Activated CD4-positive, alpha-beta memory T cell treated with anti-CD3 and anti-CD28 coated beads, Interleukin-2, amount 10 ng/mL, durations not matched to agents 7 days and 5 days (primary cell): ENCODE measurements at regions of chr17 and their contacts with region 1.

Region 1: GRCh38 chr17:39653662-39654331 is 11.4 kb upstream of the TCAP start:
- DNase-seq: peak; percentile 85
- H3K4me3 Mint-ChIP-seq: no peak overlapping the region
- H3K27ac Mint-ChIP-seq: no peak overlapping the region
- H3K4me1 Mint-ChIP-seq: peaks cover 17% of the 10 kb centered on the region
- H3K27me3 Mint-ChIP-seq: no peaks in the 10 kb centered on the region

Region 2: DNA sequence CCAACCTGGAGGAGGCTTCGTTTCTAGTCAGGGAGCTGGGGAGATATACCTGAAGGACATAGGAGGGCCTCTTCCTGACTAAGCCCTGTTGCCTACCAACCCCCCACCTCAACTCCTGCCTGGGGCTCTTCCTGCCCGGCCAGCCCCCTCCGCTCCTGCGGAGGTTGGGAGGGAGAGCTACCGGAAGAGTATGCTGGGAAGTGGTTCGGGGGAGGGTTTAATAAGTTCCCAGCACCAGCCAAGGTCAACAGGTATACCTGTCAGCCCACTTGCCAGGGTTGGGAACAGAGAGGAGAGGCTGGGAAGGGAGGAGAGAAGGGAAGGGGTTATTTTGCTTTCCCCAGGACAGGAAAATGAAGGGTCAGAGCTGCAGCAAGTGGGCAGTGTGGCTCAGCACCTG is 22.4 kb before region 1 on chr17:
- CTCF ChIA-PET with region 1: interaction called, 31 read pairs
- POLR2A ChIA-PET with region 1: no interaction called
- DNase-seq: no peak
- H3K4me3 Mint-ChIP-seq: no peak overlapping the region
- H3K27ac Mint-ChIP-seq: no peak overlapping the region
- H3K4me1 Mint-ChIP-seq: peaks cover 19% of the 10 kb centered on the region
- H3K27me3 Mint-ChIP-seq: peaks cover 33% of the 10 kb centered on the region

Region 3: DNA sequence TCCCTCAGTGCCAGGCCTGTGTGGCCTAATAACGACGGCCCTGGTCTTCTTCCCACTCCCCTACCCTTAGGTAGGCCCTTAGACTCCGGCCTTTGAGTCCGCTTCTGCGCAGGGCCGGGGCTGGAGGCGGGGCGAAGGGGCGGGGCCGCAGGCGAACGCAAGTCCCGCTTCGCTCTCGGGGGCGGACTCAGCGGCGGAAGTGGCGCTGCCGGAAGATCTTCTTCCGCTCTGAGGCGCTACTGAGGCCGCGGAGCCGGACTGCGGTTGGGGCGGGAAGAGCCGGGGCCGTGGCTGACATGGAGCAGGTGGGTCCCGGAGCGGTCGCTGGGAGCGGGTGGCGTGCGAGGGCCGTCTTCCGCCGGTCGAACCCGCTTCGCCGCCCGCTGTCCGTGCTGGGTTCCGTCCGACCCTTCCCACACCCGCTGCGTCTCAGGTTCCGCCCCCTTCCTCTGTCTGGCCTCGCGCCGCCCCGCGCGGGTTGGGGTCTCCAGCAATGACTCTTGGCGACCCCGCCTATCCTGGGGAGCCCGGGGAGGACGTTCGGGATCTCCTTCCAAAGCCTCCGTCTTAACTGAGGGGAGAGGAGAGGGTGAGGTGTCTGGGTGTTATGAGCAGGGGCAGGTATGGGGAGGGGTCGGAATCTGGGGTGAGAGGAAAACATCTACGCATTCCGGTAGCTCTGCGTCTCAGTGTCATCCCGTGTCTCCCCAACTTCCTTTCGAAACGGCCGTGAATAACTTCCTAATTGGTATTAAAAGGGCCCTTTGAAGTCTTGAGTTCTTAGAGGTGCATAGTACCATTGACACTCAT is 16.7 kb before region 1 on chr17 and contains the start of gene STARD3:
- CTCF ChIA-PET with region 1: interaction called, 31 read pairs
- POLR2A ChIA-PET with region 1: no interaction called
- DNase-seq: peak; percentile 93
- H3K4me3 Mint-ChIP-seq: peak within 1 kb of the TSS; percentile 88
- H3K27ac Mint-ChIP-seq: peak within 1 kb of the TSS; percentile 70
- H3K4me1 Mint-ChIP-seq: peaks cover 50% of the 10 kb centered on the region
- H3K27me3 Mint-ChIP-seq: no peaks in the 10 kb centered on the region
- total RNA-seq, gene STARD3: 72.0 to 73.7 TPM

Region 4: DNA sequence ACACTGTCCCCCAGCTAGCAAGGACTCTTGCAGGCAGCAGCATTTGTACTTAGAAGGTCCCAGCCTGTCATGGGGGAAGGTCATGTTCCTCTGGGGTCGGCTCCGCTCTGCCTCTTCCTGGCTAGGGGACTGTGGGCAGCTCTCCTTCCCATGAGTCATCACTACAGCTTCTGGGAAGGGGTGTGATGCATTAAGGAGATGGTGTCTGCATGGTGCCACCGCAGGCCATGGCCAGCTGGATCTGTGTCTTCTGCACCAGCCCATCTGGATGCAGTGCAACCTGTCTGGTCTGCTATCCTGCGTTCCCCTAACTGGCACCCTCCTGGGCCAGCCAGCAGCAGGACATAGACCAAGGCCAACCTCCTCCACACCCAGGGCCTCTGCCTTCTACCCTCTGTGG is 10.5 kb before region 1 on chr17:
- CTCF ChIA-PET with region 1: interaction called, 22 read pairs
- POLR2A ChIA-PET with region 1: no interaction called
- DNase-seq: no peak
- H3K4me3 Mint-ChIP-seq: no peak overlapping the region
- H3K27ac Mint-ChIP-seq: no peak overlapping the region
- H3K4me1 Mint-ChIP-seq: peaks cover 46% of the 10 kb centered on the region
- H3K27me3 Mint-ChIP-seq: no peaks in the 10 kb centered on the region

Region 5: DNA sequence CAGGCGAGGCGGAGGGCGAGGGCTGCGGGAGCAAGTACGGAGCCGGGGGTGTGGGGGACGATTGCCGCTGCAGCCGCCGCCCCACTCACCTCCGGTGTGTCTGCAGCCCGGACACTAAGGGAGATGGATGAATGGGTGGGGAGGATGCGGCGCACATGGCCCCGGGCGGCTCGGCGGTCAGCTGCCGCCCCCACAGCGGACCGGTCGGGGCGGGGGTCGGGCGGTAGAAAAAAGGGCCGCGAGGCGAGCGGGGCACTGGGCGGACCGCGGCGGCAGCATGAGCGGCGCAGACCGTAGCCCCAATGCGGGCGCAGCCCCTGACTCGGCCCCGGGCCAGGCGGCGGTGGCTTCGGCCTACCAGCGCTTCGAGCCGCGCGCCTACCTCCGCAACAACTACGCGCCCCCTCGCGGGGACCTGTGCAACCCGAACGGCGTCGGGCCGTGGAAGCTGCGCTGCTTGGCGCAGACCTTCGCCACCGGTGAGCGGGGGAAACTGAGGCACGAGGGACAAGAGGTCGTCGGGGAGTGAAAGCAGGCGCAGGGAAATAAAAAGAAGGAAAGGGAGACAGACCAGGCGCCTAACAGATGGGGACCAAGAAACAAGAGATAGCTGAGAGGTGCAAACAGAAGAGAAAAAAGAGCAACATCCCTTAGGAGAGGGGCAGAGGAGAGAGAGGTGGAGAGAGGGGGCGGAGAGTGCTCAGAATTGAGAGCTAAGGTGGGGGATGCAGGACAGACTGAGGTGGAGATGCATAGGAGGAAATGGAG is 14.6 kb after region 1 on chr17 and contains the start of gene PNMT:
- CTCF ChIA-PET with region 1: interaction called, 22 read pairs
- POLR2A ChIA-PET with region 1: interaction called, 3 read pairs
- DNase-seq: peak; percentile 70
- H3K4me3 Mint-ChIP-seq: peak within 1 kb of the TSS; percentile 27
- H3K27ac Mint-ChIP-seq: no peak within 1 kb of the TSS
- H3K4me1 Mint-ChIP-seq: peaks cover 6% of the 10 kb centered on the region
- H3K27me3 Mint-ChIP-seq: peaks cover 34% of the 10 kb centered on the region
- total RNA-seq, gene PNMT: not detected

Region 6: DNA sequence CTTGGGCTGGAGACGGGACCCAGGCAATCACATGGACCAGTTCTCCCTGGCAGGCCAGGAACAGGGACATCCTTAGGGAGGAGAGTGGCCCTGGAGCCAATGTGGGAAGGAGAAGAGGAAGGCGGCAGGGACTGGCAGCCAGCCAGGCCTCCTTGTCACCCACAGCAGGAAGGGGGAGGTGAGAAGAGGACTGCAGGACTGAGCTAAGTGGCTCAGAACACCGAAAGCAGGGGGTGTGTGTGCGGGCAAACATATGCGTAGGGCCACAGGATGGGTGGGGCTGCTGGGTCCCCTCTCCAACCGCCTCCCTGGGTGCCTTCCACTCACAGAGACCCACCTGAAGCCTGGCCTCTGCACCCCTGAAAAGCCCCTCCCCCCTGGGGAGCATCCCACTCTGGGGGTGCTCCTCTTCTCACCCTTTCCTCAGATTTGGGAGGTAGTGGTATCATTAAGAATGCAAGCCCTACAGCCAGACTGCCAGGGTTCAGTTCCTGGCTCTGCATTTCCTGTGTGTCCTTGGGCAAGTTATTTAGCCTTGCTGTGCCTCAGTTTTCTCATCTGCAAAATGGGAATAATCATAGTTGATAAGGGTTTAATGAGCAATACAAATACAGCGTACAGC is 22.5 kb after region 1 on chr17:
- CTCF ChIA-PET with region 1: interaction called, 22 read pairs
- POLR2A ChIA-PET with region 1: no interaction called
- DNase-seq: peak; percentile 74
- H3K4me3 Mint-ChIP-seq: no peak overlapping the region
- H3K27ac Mint-ChIP-seq: peak overlapping the region; percentile 77
- H3K4me1 Mint-ChIP-seq: peaks cover 58% of the 10 kb centered on the region
- H3K27me3 Mint-ChIP-seq: peaks cover 2% of the 10 kb centered on the region